ENCODE measurements at regions of chr1 and their contacts with region 1.

Region 1: GRCh38 chr1:100606438-100606837 is 68.5 kb downstream of the GPR88 start:
- DNase-seq: no peak
- H3K4me3 ChIP-seq: no peak overlapping the region
- CTCF ChIP-seq: peak; percentile 75

Region 2: DNA sequence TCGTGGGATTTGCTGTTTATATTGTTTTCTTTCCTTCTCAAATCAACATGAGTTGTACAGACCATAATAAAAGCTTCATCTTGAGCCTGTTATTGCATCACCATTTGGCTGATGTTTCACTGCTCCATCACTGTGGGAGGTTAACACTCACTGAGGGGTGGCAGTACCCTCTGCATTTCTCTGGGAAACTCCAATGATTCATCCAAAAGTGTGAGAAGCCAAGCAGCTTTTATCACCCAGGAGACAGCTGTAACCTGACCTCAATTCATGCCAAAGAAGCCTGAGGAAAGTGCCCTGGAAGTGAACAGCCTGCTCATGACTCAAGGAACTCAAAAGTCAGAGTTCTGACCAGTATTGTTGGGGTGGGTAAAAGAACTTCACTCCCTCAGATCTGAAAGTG is 15.6 kb after region 1 on chr1:
- CTCF ChIA-PET with region 1: interaction called, 18 read pairs
- POLR2A ChIA-PET with region 1: no interaction called
- DNase-seq: peak; percentile 99
- H3K4me3 ChIP-seq: no peak overlapping the region
- CTCF ChIP-seq: no peak

Region 3: DNA sequence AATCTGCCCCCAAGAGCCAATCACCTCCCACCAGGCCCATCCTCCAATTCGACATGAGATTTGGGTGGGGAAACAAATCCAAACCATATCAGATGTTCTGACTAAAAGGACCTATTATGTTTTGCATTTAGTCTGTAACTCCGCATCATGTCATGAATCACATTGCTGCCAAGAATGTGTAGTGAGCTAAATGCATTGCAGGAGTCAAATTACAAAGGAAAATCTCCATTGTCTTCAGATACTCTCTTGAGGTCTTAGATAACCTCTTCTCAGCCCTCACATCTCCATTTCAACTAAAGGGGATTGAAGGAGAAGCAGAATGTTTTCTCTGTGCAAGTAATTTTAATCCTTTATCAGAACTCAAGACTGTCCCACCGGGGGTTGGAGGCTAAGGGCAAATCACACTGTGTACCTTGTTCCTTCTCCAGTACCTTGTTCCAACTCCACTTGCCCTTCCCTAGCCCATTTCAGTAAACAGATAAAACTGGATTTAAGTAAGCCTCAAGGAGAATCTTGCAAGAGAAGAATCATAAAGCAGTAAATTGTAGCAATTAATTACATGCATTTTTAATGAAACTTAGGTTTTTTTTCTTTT is 254.1 kb after region 1 on chr1:
- CTCF ChIA-PET with region 1: interaction called, 39 read pairs
- POLR2A ChIA-PET with region 1: no interaction called
- DNase-seq: no peak
- H3K4me3 ChIP-seq: no peak overlapping the region
- CTCF ChIP-seq: no peak